Right cardiac atrium (tissue), 5 donors: ENCODE measurements at regions of chr20 and their contacts with region 1.

Region 1: DNA sequence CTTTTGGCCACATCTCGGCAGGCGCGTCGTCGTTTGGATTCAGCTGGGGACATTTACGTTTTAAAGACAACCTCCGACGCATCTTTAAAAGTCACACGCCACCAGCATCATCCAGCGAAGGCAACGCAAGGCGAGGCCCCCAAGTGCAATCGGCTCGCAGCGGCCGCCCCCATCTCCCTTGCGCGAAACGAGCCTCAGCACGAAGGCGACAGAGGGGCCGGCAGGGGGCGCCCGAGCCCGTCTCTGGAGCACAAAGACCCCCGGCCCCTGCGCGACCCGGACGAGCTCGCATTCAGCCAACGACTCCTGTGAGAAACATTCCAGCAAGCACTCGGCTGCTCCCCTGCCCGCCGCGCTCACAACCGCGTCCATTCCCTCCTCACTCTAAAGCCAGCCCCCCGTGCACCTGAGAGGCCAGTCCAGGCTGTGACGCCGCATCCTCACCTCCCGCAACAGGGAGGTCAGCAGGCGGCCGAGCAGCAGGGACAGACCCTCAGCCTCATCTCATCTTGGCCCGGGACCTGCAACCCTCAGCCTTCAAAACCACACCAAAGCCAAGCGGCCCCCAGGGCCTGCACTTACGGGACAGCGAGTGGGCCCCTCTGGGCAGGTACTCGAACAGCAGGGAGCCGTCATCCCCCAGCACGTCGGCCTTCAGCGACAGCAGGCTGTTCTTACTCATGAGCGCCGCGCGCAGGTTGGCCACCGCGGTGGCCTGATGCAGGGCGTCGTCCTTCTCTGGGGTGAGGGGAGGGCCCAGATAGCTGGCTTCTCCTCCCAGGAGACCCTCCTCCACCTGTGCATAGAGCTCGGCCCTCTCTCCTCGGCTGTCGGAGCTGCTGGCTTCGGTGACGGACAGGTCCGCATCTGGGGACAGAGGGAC is 35.8 kb downstream of the SLC2A4RG start:
- DNase-seq: peak; percentile 58 to 85 (median 85)
- ATAC-seq: peak; percentile 41 to 44
- H3K4me3 ChIP-seq: no peak overlapping the region
- H3K27ac ChIP-seq: no peak overlapping the region
- H3K4me1 ChIP-seq: no peaks in the 10 kb centered on the region
- H3K27me3 ChIP-seq: no peaks in the 10 kb centered on the region

Region 2: GRCh38 chr20:63858393-63859165 is 83.2 kb after region 1 on chr20:
- intact Hi-C with region 1: loop called in 1 of 4 experiments (anchors 5 kb)
- DNase-seq: peak; percentile 62 to 84 (median 79)
- ATAC-seq: peak; percentile 38 to 56
- H3K4me3 ChIP-seq: no peak overlapping the region
- H3K27ac ChIP-seq: peak overlapping the region; percentile 40
- H3K4me1 ChIP-seq: peaks cover 11% of the 10 kb centered on the region
- H3K27me3 ChIP-seq: no peaks in the 10 kb centered on the region